ENCODE measurements at regions of chr16 and their contacts with region 1.

Region 1: GRCh38 chr16:31713071-31713944 is 160.3 kb upstream of the ZNF267 start:
- DNase-seq: peak; percentile 92
- H3K4me3 ChIP-seq: peak overlapping the region; percentile 91 to 100
- H3K27ac ChIP-seq: peak overlapping the region; percentile 98
- H3K4me1 ChIP-seq: peaks cover 0 to 22% of the 10 kb centered on the region in 2 experiments; a peak in 2 of 4 replicates
- H3K27me3 ChIP-seq: no peaks in the 10 kb centered on the region
- CTCF ChIP-seq: no peak
- EP300 ChIP-seq: no peak
- RAD21 ChIP-seq: no peak

Region 2: GRCh38 chr16:31700526-31701388 is 12.6 kb before region 1 on chr16:
- CTCF ChIA-PET with region 1: interaction called, 30 read pairs
- POLR2A ChIA-PET with region 1: interaction called, 25 read pairs
- DNase-seq: peak; percentile 77
- H3K4me3 ChIP-seq: peak overlapping the region; percentile 81 to 98
- H3K27ac ChIP-seq: peak overlapping the region in 1 of 2 experiments; percentile 50; a peak in 1 of 4 replicates
- H3K4me1 ChIP-seq: peaks cover 0 to 8% of the 10 kb centered on the region in 2 experiments; a peak in 2 of 4 replicates
- H3K27me3 ChIP-seq: no peaks in the 10 kb centered on the region
- CTCF ChIP-seq: peak; percentile 29
- EP300 ChIP-seq: no peak
- RAD21 ChIP-seq: no peak

Region 3: DNA sequence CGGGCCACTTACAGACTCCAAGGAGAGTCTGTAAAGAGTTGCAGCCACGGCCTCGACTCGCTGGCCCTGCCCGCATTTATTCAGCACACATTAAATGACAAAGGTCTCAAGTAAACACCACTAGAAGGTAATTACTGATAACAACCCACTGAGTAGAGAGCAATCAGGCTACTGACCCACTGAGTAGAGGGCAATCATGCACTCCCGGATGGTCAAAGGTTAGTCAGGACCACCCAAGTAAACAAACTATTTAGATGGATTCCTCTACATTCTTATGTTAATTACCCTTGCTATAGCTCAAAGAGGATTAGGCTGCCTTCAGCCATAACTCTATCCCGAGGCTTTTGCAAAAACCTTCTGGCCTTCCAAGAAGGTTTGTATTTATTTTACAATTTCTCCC is 129.6 kb after region 1 on chr16:
- CTCF ChIA-PET with region 1: no interaction called
- POLR2A ChIA-PET with region 1: no interaction called
- DNase-seq: no peak
- H3K4me3 ChIP-seq: no peak overlapping the region
- H3K27ac ChIP-seq: no peak overlapping the region
- H3K4me1 ChIP-seq: no peaks in the 10 kb centered on the region
- H3K27me3 ChIP-seq: no peaks in the 10 kb centered on the region
- CTCF ChIP-seq: no peak
- EP300 ChIP-seq: no peak
- RAD21 ChIP-seq: no peak

Region 4: DNA sequence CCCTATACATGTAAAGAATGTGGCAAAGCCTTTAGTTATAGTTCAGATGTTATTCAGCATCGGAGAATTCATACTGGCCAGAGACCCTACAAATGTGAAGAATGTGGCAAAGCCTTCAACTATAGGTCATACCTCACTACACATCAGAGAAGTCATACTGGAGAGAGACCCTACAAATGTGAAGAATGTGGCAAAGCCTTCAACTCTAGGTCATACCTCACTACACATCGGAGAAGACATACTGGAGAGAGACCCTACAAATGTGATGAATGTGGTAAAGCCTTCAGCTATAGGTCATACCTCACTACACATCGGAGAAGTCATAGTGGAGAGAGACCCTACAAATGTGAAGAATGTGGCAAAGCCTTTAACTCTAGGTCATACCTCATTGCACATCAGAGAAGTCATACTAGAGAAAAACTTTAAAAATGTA is 202.8 kb after region 1 on chr16:
- CTCF ChIA-PET with region 1: no interaction called
- POLR2A ChIA-PET with region 1: no interaction called
- DNase-seq: no peak
- H3K4me3 ChIP-seq: no peak overlapping the region; a peak in 1 of 4 replicates
- H3K27ac ChIP-seq: no peak overlapping the region
- H3K4me1 ChIP-seq: no peaks in the 10 kb centered on the region
- H3K27me3 ChIP-seq: no peaks in the 10 kb centered on the region
- CTCF ChIP-seq: no peak
- EP300 ChIP-seq: no peak
- RAD21 ChIP-seq: no peak

Measured in SK-N-SH (cell line).